ENCODE measurements at regions of chr19 and their contacts with region 1.

Region 1: DNA sequence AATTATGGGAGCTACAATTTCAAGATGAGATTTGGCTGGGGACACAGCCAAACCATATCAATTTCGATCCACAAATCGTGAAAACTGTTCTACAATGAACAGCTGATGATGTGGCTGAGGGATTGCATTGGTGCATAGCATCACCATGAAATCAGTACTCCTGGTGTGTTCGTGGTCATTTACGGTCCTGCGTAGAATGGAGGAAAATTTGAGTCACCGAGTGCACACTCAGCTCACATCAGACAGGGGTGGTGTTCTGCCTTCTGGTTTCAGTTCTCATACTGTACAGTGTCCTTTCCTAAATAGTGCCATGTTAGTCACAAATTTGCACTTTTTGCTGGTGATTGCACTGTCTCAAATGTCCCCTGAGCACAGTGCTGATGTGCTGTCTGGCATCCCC is 39.2 kb downstream of the MYH14 start:
- DNase-seq: no peak
- ATAC-seq: peak in 3 of 4 donors; percentile 9 to 20 (median 19)
- H3K4me3 ChIP-seq: no peak overlapping the region
- H3K27ac ChIP-seq: no peak overlapping the region
- H3K4me1 ChIP-seq: peaks cover 10% of the 10 kb centered on the region
- H3K27me3 ChIP-seq: no peaks in the 10 kb centered on the region
- CTCF ChIP-seq: no peak

Region 2: DNA sequence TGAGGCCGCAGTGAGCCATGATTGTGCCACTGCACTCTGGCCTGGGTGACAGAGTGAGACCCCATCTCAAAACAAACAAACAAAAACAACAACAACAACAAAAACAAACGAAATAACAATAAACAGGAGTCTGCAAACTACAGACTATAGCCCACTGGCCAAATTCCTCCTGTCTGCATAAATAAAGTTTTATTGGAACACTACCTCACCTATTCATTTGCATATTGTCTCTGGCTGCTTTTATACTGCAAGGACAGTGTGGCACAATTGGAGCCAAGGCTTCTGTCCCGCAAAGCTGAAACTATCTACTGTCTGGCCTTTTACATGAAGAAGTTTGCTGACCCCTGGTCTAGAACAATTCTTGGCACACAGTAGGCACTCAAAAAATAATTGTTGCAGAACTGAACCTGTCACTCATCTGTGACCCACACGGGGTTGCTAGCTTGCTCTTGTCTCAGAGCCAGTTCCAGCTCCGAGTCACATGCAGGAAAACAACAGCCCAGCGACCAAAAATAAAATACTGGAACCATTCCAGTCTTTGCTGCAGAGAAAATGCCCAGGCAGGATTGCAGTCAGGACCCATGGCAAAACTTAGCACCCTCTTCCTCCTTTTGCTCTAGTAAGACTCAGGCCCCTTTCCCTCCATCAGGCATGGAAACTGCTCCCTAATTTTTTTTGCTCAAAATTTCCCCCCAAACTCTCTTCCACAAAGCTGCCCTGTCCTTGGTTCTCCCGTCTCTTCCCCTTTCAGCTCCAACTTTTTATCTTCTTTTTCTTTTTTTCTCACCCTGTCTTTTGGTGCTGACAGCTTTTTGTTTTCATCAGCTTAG is 43.9 kb before region 1 on chr19:
- intact Hi-C with region 1: no loop called
- DNase-seq: peak in 1 of 2 donors; percentile 60
- ATAC-seq: peak; percentile 11 to 59 (median 26)
- H3K4me3 ChIP-seq: no peak overlapping the region
- H3K27ac ChIP-seq: peak overlapping the region; percentile 66
- H3K4me1 ChIP-seq: peaks cover 11% of the 10 kb centered on the region
- H3K27me3 ChIP-seq: no peaks in the 10 kb centered on the region
- CTCF ChIP-seq: no peak

Region 3: GRCh38 chr19:50290011-50290410 is 47.4 kb after region 1 on chr19:
- intact Hi-C with region 1: loop called in 1 of 2 experiments (anchors 10 kb)
- DNase-seq: no peak
- ATAC-seq: no peak
- H3K4me3 ChIP-seq: no peak overlapping the region
- H3K27ac ChIP-seq: no peak overlapping the region
- H3K4me1 ChIP-seq: no peaks in the 10 kb centered on the region
- H3K27me3 ChIP-seq: no peaks in the 10 kb centered on the region
- CTCF ChIP-seq: no peak

Measured in psoas muscle (tissue), 8 donors.